H1 (cell line): ENCODE measurements at regions of chr11 and their contacts with region 1.

Region 1: GRCh38 chr11:130002846-130003716 is 446 bp upstream of the PRDM10 start:
- DNase-seq: peak; percentile 85 to 88
- H3K4me3 ChIP-seq: peak overlapping the region; percentile 62 to 80 (median 77)
- H3K27ac ChIP-seq: peak overlapping the region; percentile 99
- H3K4me1 ChIP-seq: peaks cover 0 to 2% (median 0%) of the 10 kb centered on the region in 4 experiments; a peak in 3 of 7 replicates
- H3K27me3 ChIP-seq: no peaks in the 10 kb centered on the region
- CTCF ChIP-seq: no peak
- EP300 ChIP-seq: no peak
- POLR2A ChIP-seq: peak in 1 of 2 experiments; percentile 68; a peak in 2 of 3 replicates
- RAD21 ChIP-seq: no peak; a peak in 1 of 4 replicates

Region 2: DNA sequence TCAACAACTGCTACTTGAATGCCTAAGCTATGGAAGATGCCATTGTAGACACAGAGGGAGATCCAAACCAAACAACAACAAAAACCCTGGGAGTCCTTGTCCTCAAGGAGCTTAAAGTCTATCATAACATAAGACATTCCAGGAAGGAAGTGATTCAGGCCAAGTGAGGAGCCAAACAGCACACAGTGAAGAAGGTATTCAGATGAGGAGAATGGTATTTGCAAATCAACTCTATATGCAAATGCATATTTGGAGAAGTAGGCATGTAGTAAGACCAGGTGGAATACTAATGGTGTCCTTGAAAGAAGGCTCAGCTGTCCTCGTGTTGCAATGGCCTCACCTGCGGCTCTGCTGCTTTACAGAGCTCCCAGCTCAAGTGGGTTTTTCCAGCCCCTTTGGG is 600.3 kb before region 1 on chr11:
- CTCF ChIA-PET with region 1: no interaction called
- POLR2A ChIA-PET with region 1: no interaction called
- DNase-seq: no peak
- H3K4me3 ChIP-seq: no peak overlapping the region
- H3K27ac ChIP-seq: no peak overlapping the region
- H3K4me1 ChIP-seq: no peaks in the 10 kb centered on the region
- H3K27me3 ChIP-seq: no peaks in the 10 kb centered on the region; a peak in 1 of 7 replicates
- CTCF ChIP-seq: no peak
- EP300 ChIP-seq: no peak
- POLR2A ChIP-seq: no peak
- RAD21 ChIP-seq: no peak

Region 3: DNA sequence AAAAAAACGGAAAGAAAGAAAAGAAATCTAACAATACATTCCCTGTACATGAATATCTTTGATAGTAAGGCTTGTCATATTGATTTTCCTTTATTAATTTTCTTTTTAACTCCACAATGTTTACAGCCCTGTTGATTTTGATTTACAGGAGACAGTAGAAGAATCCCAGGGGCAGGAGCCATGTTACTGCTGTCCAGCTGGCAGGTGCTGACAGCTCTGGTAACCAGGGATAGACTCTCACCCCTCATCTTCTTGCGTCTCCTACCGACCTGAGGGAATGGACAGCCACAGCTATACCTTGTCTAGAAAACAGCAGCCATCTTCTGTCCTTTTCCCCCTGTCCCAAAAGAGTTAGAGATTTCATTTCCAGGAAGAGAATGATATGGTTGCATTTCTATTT is 37.8 kb before region 1 on chr11:
- CTCF ChIA-PET with region 1: no interaction called
- POLR2A ChIA-PET with region 1: no interaction called
- DNase-seq: no peak
- H3K4me3 ChIP-seq: no peak overlapping the region
- H3K27ac ChIP-seq: no peak overlapping the region
- H3K4me1 ChIP-seq: no peaks in the 10 kb centered on the region
- H3K27me3 ChIP-seq: no peaks in the 10 kb centered on the region; a peak in 1 of 7 replicates
- CTCF ChIP-seq: no peak
- EP300 ChIP-seq: no peak
- POLR2A ChIP-seq: no peak
- RAD21 ChIP-seq: no peak

Region 4: DNA sequence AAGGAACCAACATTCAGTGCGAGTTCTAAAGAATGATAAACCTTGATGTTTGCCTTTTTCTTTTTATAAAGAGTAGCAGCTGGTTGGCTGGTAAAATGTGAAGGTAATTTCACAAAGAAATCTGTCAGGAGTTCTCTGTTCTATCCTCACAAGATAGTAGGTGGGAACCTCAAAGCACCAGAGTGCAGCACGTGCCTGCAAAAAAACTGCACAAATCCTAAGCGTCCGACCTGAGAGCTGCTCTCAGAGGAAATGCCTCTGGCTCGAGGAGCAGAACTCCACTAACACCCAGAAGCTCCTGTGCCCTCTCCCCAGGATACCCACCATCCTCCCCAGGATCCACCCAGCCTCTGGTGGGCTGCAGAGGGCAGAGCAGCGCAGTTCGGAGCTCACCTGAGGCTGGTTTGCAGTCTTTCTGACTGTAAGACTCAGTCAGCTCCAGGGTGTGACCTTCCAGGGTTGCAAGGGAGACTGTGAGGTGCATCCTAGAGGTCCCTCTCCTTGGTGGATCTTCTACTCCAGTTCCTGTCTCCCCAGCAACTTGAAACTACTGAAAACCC is 24.0 kb before region 1 on chr11:
- CTCF ChIA-PET with region 1: interaction called, 3 read pairs
- POLR2A ChIA-PET with region 1: interaction called, 20 read pairs
- DNase-seq: no peak
- H3K4me3 ChIP-seq: no peak overlapping the region
- H3K27ac ChIP-seq: no peak overlapping the region
- H3K4me1 ChIP-seq: no peaks in the 10 kb centered on the region
- H3K27me3 ChIP-seq: no peaks in the 10 kb centered on the region
- CTCF ChIP-seq: no peak
- EP300 ChIP-seq: no peak
- POLR2A ChIP-seq: no peak
- RAD21 ChIP-seq: 0 out of 4 replicates have a peak, but pooled peaks of 1 of the 2 experiments have one; percentile 6

Region 5: GRCh38 chr11:129992161-129992944 is 10.7 kb before region 1 on chr11:
- CTCF ChIA-PET with region 1: interaction called, 16 read pairs
- POLR2A ChIA-PET with region 1: interaction called, 48 read pairs
- DNase-seq: peak in 1 of 2 experiments; percentile 56
- H3K4me3 ChIP-seq: no peak overlapping the region
- H3K27ac ChIP-seq: no peak overlapping the region
- H3K4me1 ChIP-seq: peaks cover 0 to 2% (median 0%) of the 10 kb centered on the region in 4 experiments; a peak in 2 of 7 replicates
- H3K27me3 ChIP-seq: peaks cover 0 to 2% (median 0%) of the 10 kb centered on the region in 4 experiments; a peak in 1 of 7 replicates
- CTCF ChIP-seq: peak; percentile 68 to 80 (median 69)
- EP300 ChIP-seq: no peak
- POLR2A ChIP-seq: no peak
- RAD21 ChIP-seq: peak; percentile 72 to 77

Region 6: DNA sequence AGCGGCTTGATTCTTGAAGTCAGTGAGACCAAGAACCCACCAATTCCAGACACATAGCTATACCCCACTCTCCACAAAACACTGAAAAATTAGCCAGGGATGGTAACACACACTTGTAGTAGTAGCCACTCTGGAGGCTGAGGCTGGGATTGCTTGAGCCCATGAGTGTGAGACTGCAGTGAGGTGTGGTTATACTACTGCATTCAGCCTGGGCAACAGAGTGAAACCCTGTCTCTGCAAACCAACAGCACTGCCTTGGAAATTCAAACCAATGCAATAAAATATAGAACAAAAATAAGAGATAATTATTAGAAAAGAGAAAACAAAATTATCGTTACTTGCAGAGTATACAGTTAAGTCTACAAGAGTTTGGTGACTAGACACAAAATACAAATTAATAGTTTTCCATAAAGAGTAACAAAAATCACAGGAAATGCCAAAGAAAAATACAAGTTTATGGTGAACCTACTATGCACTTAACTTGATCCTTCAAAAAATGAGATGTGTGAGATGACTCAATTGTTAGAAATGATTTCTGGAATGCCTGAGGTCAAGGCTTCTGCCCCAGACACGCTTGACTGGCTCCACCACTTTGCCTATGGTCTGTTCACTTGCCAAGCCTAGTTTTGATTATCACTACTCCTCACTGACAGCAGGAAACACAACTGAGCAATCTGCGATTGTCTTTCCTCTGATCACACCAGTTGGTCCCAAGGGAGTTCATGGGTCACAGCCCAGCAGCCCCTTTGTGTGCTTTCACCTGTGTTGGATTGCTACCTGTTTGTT is 19.9 kb after region 1 on chr11:
- CTCF ChIA-PET with region 1: interaction called, 3 read pairs
- POLR2A ChIA-PET with region 1: interaction called, 11 read pairs
- DNase-seq: no peak
- H3K4me3 ChIP-seq: no peak overlapping the region
- H3K27ac ChIP-seq: no peak overlapping the region
- H3K4me1 ChIP-seq: no peaks in the 10 kb centered on the region
- H3K27me3 ChIP-seq: no peaks in the 10 kb centered on the region
- CTCF ChIP-seq: no peak
- EP300 ChIP-seq: no peak
- POLR2A ChIP-seq: no peak
- RAD21 ChIP-seq: no peak

Region 7: GRCh38 chr11:130069684-130070108 is 66.6 kb after region 1 on chr11 and contains the start of gene APLP2:
- CTCF ChIA-PET with region 1: interaction called, 5 read pairs
- POLR2A ChIA-PET with region 1: interaction called, 39 read pairs
- DNase-seq: peak; percentile 94 to 97
- H3K4me3 ChIP-seq: peak within 1 kb of the TSS; percentile 66 to 97 (median 86)
- H3K27ac ChIP-seq: peak within 1 kb of the TSS; percentile 86; the same call in 1 of the 2 replicates
- H3K4me1 ChIP-seq: peaks cover 2 to 7% (median 6%) of the 10 kb centered on the region in 4 experiments; a peak in 5 of 7 replicates
- H3K27me3 ChIP-seq: peaks cover 3 to 20% (median 14%) of the 10 kb centered on the region in 4 experiments
- CTCF ChIP-seq: no peak
- EP300 ChIP-seq: no peak
- POLR2A ChIP-seq: peak; percentile 94 to 95
- RAD21 ChIP-seq: no peak; a peak in 1 of 4 replicates
- total RNA-seq, gene APLP2: 311 and 315 TPM in 2 replicates